ENCODE measurements at regions of chr5 and their contacts with region 1.

Region 1: DNA sequence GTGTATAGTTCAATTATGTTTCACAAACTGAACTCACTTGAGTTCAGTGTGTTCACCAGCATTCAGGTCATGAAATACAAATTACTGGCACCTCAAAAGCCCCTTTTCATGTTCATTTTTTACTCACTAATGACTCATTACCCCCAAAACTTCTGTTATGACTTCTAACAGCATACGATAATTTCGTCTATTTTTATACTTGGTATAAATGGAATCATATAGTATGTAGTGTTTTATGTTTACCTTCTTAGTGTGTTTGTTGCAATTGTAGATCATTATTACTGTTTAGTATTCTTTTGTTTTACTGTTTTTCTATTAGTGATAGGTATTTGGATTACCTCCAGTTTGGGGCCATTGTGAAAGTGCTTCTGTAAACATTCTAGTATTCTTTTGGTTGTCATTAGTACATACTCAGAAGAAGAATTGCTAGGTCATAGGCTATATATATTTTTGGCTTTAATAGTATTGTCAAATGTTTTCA is 33.4 kb downstream of the DDX4 start:
- DNase-seq: no peak
- ATAC-seq: peak; percentile 93
- H3K4me3 Mint-ChIP-seq: no peak overlapping the region
- H3K27ac Mint-ChIP-seq: no peak overlapping the region
- H3K4me1 Mint-ChIP-seq: peaks cover 13% of the 10 kb centered on the region
- H3K27me3 Mint-ChIP-seq: peaks cover 11% of the 10 kb centered on the region

Region 2: GRCh38 chr5:55724281-55724680 is 46.9 kb before region 1 on chr5:
- CTCF ChIA-PET with region 1: no interaction called
- POLR2A ChIA-PET with region 1: no interaction called
- intact Hi-C with region 1: no loop called
- DNase-seq: no peak
- ATAC-seq: no peak
- H3K4me3 Mint-ChIP-seq: no peak overlapping the region
- H3K27ac Mint-ChIP-seq: no peak overlapping the region
- H3K4me1 Mint-ChIP-seq: peaks cover 4% of the 10 kb centered on the region
- H3K27me3 Mint-ChIP-seq: no peaks in the 10 kb centered on the region

Region 3: DNA sequence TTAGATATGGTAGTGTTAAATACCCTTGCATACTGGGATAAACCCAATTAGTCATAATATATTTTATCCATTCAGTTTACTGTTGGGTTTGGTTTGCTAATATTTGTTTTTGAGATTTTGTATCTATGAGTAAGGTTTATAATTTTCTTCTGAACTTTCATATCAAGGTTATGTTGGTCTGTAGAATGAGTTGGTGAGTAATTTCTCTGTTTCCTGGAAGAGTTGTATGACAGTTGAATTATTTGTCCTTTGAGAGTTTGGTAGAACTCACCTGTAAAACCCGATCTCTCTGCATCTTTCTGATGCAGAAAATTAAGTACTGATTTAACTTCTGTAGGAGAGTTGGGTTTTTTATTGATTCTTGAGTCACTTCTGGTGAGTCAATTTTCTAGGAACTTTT is 13.0 kb before region 1 on chr5:
- CTCF ChIA-PET with region 1: interaction called, 3 read pairs
- POLR2A ChIA-PET with region 1: no interaction called
- intact Hi-C with region 1: loop called in 1 of 2 experiments (anchors 1 kb)
- DNase-seq: no peak
- ATAC-seq: peak; percentile 92
- H3K4me3 Mint-ChIP-seq: peak overlapping the region; percentile 3
- H3K27ac Mint-ChIP-seq: no peak overlapping the region
- H3K4me1 Mint-ChIP-seq: peaks cover 9% of the 10 kb centered on the region
- H3K27me3 Mint-ChIP-seq: peaks cover 12% of the 10 kb centered on the region